ENCODE measurements at regions of chr1 and their contacts with region 1.

Region 1: GRCh38 chr1:48969971-48970370 is 193.3 kb upstream of the BEND5 start:
- DNase-seq: no peak
- ATAC-seq: no peak
- H3K4me3 ChIP-seq: no peak overlapping the region
- H3K27ac ChIP-seq: no peak overlapping the region
- H3K4me1 ChIP-seq: no peaks in the 10 kb centered on the region
- H3K27me3 ChIP-seq: no peaks in the 10 kb centered on the region
- CTCF ChIP-seq: no peak

Region 2: GRCh38 chr1:49102752-49103151 is 132.8 kb after region 1 on chr1:
- intact Hi-C with region 1: no loop called
- DNase-seq: no peak
- ATAC-seq: no peak
- H3K4me3 ChIP-seq: no peak overlapping the region
- H3K27ac ChIP-seq: no peak overlapping the region
- H3K4me1 ChIP-seq: no peaks in the 10 kb centered on the region
- H3K27me3 ChIP-seq: no peaks in the 10 kb centered on the region
- CTCF ChIP-seq: no peak

Region 3: DNA sequence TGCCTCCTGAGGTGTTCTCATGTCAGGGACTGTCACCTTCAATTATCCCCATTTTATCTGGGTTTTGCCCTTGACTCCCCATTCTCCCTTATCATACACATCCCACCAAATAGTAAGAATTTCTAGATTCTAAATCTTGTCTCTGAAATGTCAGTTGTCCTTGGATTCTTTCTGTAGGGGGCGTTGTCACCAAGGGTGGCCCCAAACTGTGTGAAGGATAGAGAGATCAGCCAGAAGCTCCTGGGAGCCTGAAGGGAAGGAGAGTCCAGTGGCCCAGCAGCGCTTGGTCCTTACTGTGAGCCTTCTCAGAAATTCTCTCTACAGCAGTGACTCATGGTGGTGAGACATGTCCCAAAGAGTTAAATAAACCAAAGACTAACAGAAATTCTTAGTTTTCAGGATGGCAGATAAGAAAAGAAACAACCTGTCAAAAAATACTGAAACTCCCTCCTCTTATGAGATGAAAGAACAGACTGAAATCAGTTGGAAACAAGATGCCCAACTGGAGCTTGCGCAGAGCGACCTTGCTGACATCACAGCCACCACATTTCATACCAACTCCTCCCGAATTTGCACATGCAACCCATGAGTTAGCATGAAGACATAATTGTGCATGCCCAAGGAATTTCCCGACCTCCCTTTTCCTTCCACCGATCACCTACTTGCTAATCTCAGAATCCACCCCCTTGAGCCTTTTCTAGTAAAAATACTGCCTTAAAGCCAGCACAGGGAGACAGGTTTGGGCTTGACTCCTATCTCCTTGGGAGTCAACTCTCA is 1248.6 kb after region 1 on chr1:
- intact Hi-C with region 1: loop called in 1 of 10 experiments (anchors 5 kb)
- DNase-seq: no peak
- ATAC-seq: no peak
- H3K4me3 ChIP-seq: no peak overlapping the region
- H3K27ac ChIP-seq: no peak overlapping the region
- H3K4me1 ChIP-seq: no peaks in the 10 kb centered on the region
- H3K27me3 ChIP-seq: peaks cover 0 to 9% (median 0%) of the 10 kb centered on the region in 7 donors
- CTCF ChIP-seq: no peak

Measured in heart right ventricle (tissue), 16 donors.